ENCODE measurements at regions of chr1 and their contacts with region 1.

Region 1: DNA sequence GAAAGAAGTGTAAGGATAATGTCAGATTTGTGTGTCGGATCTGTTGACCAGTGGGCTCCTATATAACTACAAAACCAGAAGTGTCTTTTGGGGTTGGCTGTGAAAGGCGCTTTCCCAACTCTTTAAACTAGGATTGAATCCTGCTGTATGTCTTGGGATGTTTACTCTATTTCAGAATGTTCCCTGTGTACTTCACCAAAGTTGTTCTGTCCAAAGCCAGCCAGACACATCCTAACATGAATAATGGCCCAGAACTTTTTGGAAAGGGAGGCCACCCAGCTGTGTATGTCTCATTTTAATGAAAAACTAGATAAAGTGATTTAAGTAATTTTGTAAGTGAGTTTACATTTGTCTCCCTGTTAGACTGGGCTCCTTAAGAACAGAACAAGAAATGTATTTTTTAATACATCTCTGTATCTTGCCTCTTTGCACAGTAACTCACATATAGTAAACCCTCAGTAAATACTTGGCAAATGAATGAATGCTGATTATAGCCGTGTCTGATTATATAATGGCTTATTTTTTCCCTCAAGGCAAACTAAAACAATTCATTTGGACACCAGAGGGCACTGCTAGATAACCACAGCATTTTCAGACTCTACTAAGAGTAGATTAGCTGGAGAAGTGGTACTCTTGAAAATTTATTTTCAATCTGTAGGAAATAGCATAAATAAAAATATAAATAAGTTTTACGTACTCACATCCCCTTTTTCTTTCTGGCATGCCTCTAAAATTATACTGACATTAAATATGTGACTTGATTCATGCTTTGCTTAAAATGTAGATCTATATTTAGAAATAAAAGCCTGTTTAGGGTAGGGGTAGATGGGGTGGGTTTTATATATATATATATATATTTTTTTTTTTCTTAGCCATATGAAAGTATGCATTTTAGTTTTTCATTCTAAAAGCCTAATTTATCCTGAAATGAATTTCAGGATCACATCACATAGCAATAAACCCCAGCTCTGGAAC is 23.8 kb downstream of the TSEN15 start:
- DNase-seq: peak; percentile 22
- CTCF ChIP-seq: peak; percentile 42

Region 2: GRCh38 chr1:184222652-184223052 is 147.3 kb after region 1 on chr1:
- in situ Hi-C with region 1: loop called (anchors 5 kb)
- DNase-seq: peak; percentile 69
- CTCF ChIP-seq: peak; percentile 93

Region 3: DNA sequence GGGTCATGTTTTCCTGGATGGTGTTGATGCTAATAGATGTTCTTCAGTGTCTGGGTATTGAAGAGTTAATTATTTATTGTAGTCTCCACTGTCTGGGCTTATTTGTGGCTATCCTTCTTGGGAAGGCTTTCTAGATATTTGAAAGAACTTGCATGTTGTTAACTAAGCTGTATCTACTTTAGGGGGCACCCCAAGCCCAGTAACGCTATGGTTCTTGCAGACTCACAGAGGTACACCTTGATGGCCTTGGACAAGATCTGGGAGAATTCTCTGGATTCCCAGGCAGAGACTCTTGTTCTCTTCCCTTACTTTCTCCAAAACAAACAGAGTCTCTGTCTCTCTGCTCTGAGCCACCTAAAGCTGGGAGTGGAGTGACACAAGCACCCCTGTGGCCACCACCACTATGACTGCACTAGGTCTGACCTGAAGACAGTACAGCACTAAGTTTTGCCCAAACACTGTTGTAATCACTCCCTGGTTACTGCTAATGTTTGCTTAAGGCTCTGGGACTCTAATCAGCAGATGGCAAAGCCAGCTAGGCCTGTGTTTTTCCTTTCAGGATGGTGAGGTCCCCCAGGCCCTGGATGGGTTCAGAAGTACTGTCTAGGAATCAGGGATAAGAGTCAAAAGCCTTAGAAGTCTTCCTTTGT is 234.9 kb after region 1 on chr1:
- in situ Hi-C with region 1: no loop called
- DNase-seq: no peak
- CTCF ChIP-seq: no peak

Region 4: GRCh38 chr1:184664042-184664655 is 588.8 kb after region 1 on chr1:
- in situ Hi-C with region 1: loop called (anchors 25 kb)
- DNase-seq: peak; percentile 85
- CTCF ChIP-seq: peak; percentile 90